ENCODE measurements at regions of chr19 and their contacts with region 1.

Region 1: GRCh38 chr19:15449620-15450527 is at the start of gene WIZ:
- DNase-seq: peak; percentile 53 to 91 (median 81)

Region 2: GRCh38 chr19:15125232-15126067 is 324.4 kb before region 1 on chr19:
- intact Hi-C with region 1: loop called (anchors 10 kb)
- DNase-seq: peak; percentile 94 to 99 (median 98)

Region 3: GRCh38 chr19:15136246-15136954 is 313.5 kb before region 1 on chr19:
- intact Hi-C with region 1: no loop called
- DNase-seq: no peak

Region 4: DNA sequence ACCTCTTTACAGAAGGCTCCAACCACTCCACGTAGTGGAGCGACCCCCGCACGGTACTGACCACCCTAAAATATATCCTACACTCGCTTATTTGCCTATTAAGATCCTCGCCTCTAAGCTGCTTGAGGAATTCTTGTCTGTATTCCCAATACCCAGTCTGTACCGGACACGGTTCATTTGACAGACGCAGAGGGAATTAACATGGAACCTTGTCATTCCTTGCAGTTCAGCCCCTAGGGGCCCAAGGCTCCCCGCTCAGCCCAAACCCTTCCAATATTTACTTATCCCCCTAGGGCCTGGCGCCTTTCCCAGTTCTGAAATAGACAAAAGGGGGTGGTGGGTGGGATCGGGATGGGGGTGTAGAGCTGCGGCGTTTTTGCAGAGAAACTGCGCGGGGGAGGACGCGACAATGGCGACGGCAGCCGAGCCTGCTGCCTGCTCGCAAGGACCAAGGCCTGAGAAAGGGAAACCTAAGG is 31.7 kb before region 1 on chr19:
- intact Hi-C with region 1: no loop called
- DNase-seq: peak in 41 of 42 donors; percentile 31 to 82 (median 59)

Region 5: GRCh38 chr19:15432629-15433518 is 17.0 kb before region 1 on chr19:
- intact Hi-C with region 1: no loop called
- DNase-seq: peak; percentile 77 to 98 (median 95)

Measured in head of caudate nucleus (tissue), 42 donors.